ENCODE measurements at regions of chr1 and their contacts with region 1.

Region 1: DNA sequence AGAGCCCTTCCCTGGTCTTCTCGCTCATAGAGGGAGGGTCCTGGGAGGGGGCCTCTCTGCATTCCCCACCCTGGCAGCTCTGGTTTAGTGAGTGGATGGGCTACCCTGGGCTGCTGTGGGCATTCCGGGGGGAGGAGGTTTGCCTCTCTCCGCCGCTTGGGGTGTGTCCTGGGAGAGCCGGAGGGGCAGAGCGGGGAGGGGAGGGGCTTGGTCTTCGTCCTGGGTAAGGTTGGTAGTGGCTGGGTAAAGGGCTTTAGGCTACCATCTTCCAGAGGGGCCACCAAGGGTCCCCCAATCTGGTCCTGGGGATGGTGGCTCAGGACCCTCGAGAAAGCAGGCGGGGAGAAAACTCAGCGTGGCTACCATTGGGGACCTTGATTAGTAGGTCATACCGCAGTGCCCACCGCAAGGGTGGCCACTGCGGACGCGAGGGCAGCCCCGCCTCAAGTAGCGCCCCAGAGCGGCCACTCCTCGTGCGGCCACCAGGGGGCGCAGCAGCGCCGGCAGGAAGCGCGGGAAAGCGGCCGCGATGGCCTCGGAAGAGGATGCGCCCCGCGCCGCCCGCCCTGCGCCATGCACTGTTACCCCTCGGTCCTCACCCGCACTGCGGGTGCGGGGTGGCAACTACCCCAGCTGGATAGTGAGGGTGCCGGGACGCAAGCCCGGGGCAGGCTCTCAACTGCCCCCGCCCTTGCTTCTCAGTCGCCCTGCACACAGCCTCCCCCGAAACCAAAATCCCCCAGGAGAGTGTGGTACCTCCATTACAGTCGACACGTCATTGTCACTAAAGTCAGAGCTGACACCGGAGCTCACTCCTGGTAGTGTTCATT is 44.1 kb upstream of the SLC25A33 start:
- DNase-seq: peak; percentile 29
- H3K4me3 Mint-ChIP-seq: no peak overlapping the region
- H3K27ac Mint-ChIP-seq: no peak overlapping the region
- H3K4me1 Mint-ChIP-seq: no peaks in the 10 kb centered on the region
- H3K27me3 Mint-ChIP-seq: no peaks in the 10 kb centered on the region
- CTCF ChIP-seq: peak; percentile 90

Region 2: GRCh38 chr1:9110669-9111356 is 384.3 kb before region 1 on chr1:
- CTCF ChIA-PET with region 1: interaction called, 5 read pairs
- POLR2A ChIA-PET with region 1: no interaction called
- intact Hi-C with region 1: loop called (anchors 1 kb)
- DNase-seq: peak; percentile 99
- H3K4me3 Mint-ChIP-seq: no peak overlapping the region
- H3K27ac Mint-ChIP-seq: no peak overlapping the region
- H3K4me1 Mint-ChIP-seq: peaks cover 41% of the 10 kb centered on the region
- H3K27me3 Mint-ChIP-seq: no peaks in the 10 kb centered on the region
- CTCF ChIP-seq: peak; percentile 92

Region 3: GRCh38 chr1:9181176-9181906 is 313.8 kb before region 1 on chr1:
- CTCF ChIA-PET with region 1: interaction called, 3 read pairs
- POLR2A ChIA-PET with region 1: no interaction called
- intact Hi-C with region 1: loop called (anchors 5 kb)
- DNase-seq: peak; percentile 75
- H3K4me3 Mint-ChIP-seq: peak overlapping the region; percentile 91
- H3K27ac Mint-ChIP-seq: peak overlapping the region; percentile 93
- H3K4me1 Mint-ChIP-seq: peaks cover 20% of the 10 kb centered on the region
- H3K27me3 Mint-ChIP-seq: no peaks in the 10 kb centered on the region
- CTCF ChIP-seq: peak; percentile 95

Region 4: GRCh38 chr1:9270290-9270883 is 224.8 kb before region 1 on chr1:
- CTCF ChIA-PET with region 1: interaction called, 22 read pairs
- POLR2A ChIA-PET with region 1: interaction called, 3 read pairs
- intact Hi-C with region 1: loop called (anchors 1 kb)
- DNase-seq: peak; percentile 47
- H3K4me3 Mint-ChIP-seq: no peak overlapping the region
- H3K27ac Mint-ChIP-seq: no peak overlapping the region
- H3K4me1 Mint-ChIP-seq: peaks cover 12% of the 10 kb centered on the region
- H3K27me3 Mint-ChIP-seq: no peaks in the 10 kb centered on the region
- CTCF ChIP-seq: no peak

Region 5: DNA sequence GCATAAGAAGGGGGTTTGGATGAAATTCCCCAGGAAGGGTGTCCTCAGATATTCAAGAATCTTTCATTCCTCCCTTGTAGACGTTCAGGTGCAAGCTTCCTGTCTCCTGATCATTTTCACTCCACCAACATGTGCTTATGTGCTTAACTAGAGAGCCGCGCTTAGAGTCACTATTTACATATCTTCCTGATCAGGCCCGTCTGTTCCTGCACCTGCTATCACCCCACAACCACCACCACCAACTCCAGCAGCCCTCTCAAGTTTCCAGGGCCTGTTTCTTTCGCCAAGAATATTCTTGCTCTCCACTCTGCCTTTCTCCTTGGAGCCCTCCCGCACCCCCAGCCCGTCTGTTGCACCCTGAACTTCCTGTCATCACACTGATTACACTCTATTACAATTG is 89.0 kb before region 1 on chr1:
- CTCF ChIA-PET with region 1: no interaction called
- POLR2A ChIA-PET with region 1: no interaction called
- intact Hi-C with region 1: no loop called
- DNase-seq: no peak
- H3K4me3 Mint-ChIP-seq: no peak overlapping the region
- H3K27ac Mint-ChIP-seq: no peak overlapping the region
- H3K4me1 Mint-ChIP-seq: no peaks in the 10 kb centered on the region
- H3K27me3 Mint-ChIP-seq: no peaks in the 10 kb centered on the region
- CTCF ChIP-seq: no peak

Region 6: DNA sequence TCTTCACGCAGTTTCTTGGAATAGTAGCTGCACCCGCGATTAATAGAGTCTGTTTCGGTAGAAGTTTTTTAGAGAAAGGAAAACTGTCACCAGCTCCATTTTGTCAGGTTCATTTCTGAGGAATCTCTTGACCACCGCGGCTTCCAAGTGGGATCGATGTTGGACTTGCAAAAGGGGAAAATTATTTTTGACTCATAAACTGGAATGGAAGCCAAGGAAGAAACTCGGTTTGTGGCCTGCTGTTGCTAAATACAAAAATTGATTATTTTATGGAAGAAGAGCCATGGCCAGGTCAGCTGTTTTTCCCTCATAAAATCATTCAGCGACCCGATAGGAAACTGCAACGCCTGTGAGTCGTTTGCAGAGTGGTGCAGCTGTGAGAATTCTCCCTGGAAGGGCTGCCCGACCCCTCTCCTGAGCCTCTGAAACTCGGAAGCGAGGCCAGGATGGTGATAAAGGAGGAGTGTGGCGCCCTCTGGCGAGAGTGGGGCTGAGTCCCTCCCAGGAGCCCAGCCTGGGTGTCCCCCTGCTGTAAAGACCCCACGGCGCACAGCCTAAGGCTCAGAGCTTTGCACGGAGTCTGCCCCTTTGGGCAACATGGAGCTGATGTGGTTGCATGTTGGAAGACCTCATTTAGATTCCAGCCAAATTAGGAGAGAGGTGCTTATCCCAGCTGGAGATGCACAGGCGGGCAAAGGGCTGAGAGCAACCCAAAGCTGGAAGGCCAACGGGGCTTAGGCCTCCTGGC is 39.5 kb before region 1 on chr1:
- CTCF ChIA-PET with region 1: interaction called, 7 read pairs
- POLR2A ChIA-PET with region 1: no interaction called
- intact Hi-C with region 1: loop called (anchors 5 kb)
- DNase-seq: peak; percentile 63
- H3K4me3 Mint-ChIP-seq: no peak overlapping the region
- H3K27ac Mint-ChIP-seq: no peak overlapping the region
- H3K4me1 Mint-ChIP-seq: no peaks in the 10 kb centered on the region
- H3K27me3 Mint-ChIP-seq: no peaks in the 10 kb centered on the region
- CTCF ChIP-seq: peak; percentile 78

Region 7: GRCh38 chr1:9573723-9574122 is 78.6 kb after region 1 on chr1:
- CTCF ChIA-PET with region 1: interaction called, 53 read pairs
- POLR2A ChIA-PET with region 1: no interaction called
- intact Hi-C with region 1: loop called (anchors 2 kb)
- DNase-seq: peak; percentile 27
- H3K4me3 Mint-ChIP-seq: no peak overlapping the region
- H3K27ac Mint-ChIP-seq: no peak overlapping the region
- H3K4me1 Mint-ChIP-seq: no peaks in the 10 kb centered on the region
- H3K27me3 Mint-ChIP-seq: no peaks in the 10 kb centered on the region
- CTCF ChIP-seq: no peak